ENCODE measurements at regions of chr1 and their contacts with region 1.

Region 1: DNA sequence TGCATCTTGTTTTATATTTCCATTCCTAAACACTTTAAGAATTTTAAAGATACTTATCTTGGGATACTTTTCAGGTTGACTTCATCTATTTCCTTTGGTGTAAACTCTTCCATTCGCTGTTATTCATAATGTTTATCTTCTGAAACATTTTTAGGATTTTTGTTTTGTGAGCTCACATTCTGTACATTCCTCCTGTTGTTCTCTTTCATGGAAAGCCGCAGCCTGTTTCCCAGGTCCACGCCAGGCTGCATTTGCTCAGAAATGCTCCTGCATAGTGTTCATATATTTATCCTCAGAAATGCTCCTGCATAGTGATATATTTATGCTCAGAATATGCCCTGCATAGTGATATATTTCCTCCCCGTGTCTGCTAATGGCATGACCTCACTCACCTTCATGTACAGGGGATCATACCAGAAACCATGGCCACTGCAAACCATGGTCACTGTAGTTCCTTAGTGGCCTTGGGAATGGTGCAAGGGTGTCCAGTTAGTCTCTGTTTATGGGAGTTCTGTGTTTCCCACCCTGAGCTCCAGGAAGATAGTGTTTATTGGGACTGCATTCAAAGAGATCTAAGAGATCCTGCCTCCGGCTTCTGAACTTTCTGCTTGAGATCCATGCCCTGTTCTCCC is 153.9 kb upstream of the GREM2 start:
- DNase-seq: peak; percentile 75 to 84
- H3K4me3 ChIP-seq: no peak overlapping the region
- H3K27ac ChIP-seq: peak overlapping the region; percentile 55
- H3K4me1 ChIP-seq: peaks cover 19% of the 10 kb centered on the region
- H3K27me3 ChIP-seq: peaks cover 9% of the 10 kb centered on the region
- CTCF ChIP-seq: no peak

Region 2: GRCh38 chr1:240732390-240732789 is 33.5 kb before region 1 on chr1:
- CTCF ChIA-PET with region 1: no interaction called
- POLR2A ChIA-PET with region 1: no interaction called
- intact Hi-C with region 1: loop called (anchors 1 kb)
- DNase-seq: peak; percentile 15 to 48
- H3K4me3 ChIP-seq: no peak overlapping the region
- H3K27ac ChIP-seq: no peak overlapping the region
- H3K4me1 ChIP-seq: no peaks in the 10 kb centered on the region
- H3K27me3 ChIP-seq: peaks cover 12% of the 10 kb centered on the region; the same call in 1 of the 2 replicates
- CTCF ChIP-seq: peak; percentile 86

Region 3: GRCh38 chr1:240784776-240785175 is 18.9 kb after region 1 on chr1:
- CTCF ChIA-PET with region 1: no interaction called
- POLR2A ChIA-PET with region 1: interaction called, 15 read pairs
- intact Hi-C with region 1: loop called (anchors 1 kb)
- DNase-seq: no peak
- H3K4me3 ChIP-seq: no peak overlapping the region
- H3K27ac ChIP-seq: no peak overlapping the region
- H3K4me1 ChIP-seq: peaks cover 16% of the 10 kb centered on the region; the same call in 1 of the 2 replicates
- H3K27me3 ChIP-seq: no peaks in the 10 kb centered on the region
- CTCF ChIP-seq: no peak

Region 4: DNA sequence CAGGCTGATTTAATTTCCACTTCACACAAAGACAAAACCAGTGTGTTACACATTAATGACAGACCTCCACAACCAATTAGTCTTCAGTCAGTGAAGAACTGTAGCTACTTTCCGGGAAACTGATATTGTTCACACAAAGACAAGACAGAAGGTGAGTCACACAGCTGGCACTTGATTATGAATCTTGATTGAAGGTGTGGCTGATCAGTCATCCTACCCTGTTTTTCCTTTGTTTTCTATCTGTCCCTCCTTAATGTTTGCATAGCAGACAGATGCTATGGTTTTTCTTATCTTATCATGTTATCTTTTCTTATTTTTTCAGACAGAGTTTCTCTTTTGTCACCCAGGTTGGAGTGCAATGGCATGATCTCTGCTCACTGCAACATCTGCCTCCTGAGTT is 31.2 kb after region 1 on chr1:
- CTCF ChIA-PET with region 1: no interaction called
- POLR2A ChIA-PET with region 1: no interaction called
- intact Hi-C with region 1: loop called (anchors 1 kb)
- DNase-seq: peak; percentile 31 to 65
- H3K4me3 ChIP-seq: no peak overlapping the region
- H3K27ac ChIP-seq: no peak overlapping the region
- H3K4me1 ChIP-seq: peaks cover 10% of the 10 kb centered on the region; the same call in 1 of the 2 replicates
- H3K27me3 ChIP-seq: no peaks in the 10 kb centered on the region
- CTCF ChIP-seq: no peak

Region 5: DNA sequence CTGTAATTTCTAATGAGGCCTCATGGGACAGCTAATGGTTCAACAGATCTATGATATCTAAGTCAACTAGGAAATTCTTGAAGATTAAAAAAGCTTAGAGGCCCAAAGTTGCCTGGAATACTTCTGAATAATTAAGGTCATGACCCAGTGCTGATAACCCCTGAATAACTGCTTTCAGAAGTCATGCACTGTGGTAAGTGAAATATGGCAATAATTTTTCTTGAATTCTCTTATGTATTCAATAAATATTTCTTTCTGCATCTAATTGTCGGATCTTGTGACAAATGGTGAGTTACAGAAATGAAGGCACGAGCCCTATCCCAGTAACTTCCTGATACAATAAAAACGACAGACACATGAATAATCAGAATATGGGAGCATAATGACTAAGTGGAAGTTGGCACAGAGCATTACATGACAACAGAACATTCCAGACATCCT is 65.4 kb after region 1 on chr1:
- CTCF ChIA-PET with region 1: no interaction called
- POLR2A ChIA-PET with region 1: interaction called, 5 read pairs
- intact Hi-C with region 1: loop called (anchors 1 kb)
- DNase-seq: peak; percentile 9 to 69
- H3K4me3 ChIP-seq: no peak overlapping the region
- H3K27ac ChIP-seq: no peak overlapping the region
- H3K4me1 ChIP-seq: no peaks in the 10 kb centered on the region
- H3K27me3 ChIP-seq: peaks cover 29% of the 10 kb centered on the region; the same call in 1 of the 2 replicates
- CTCF ChIP-seq: no peak

Region 6: DNA sequence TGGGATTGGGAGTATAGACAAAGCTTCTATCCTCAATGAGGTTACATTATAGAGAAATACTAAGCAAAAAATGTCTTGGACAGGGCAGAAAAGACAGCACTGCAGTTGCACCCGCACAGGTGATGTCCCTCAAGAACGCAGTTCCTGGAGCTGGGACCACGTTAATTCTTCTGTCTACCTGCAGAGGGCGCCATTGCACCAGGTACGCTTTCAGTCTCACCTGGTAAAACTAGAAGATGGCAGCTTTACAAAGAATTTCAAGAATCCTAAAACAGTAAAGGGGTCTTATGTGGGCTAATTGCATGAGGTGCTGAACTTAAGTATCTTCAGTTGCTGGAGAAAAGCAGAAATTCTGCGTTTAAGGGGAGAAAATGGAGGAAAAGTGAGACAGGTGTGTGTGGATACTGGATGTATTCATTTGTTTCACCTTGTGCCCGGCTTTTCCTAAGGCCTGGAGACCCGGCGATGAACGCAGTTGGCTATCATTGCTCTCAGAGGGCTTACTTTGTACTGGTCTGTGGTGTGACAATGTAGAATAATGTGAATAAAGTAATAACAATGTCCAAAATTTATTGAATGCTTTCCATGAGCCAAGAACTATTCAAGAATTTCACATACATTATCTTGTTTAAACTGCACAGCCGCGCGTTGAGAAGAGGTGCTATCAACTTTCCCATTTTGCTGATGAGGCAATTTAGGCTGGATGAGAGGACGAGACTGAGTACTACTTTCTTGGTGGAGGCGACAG is 122.4 kb after region 1 on chr1:
- CTCF ChIA-PET with region 1: no interaction called
- POLR2A ChIA-PET with region 1: no interaction called
- intact Hi-C with region 1: loop called (anchors 10 kb)
- DNase-seq: peak in 1 of 2 experiments; percentile 47
- H3K4me3 ChIP-seq: no peak overlapping the region
- H3K27ac ChIP-seq: no peak overlapping the region
- H3K4me1 ChIP-seq: no peaks in the 10 kb centered on the region
- H3K27me3 ChIP-seq: no peaks in the 10 kb centered on the region
- CTCF ChIP-seq: peak; percentile 92

Region 7: GRCh38 chr1:241077386-241078147 is 311.7 kb after region 1 on chr1:
- CTCF ChIA-PET with region 1: no interaction called
- POLR2A ChIA-PET with region 1: no interaction called
- intact Hi-C with region 1: no loop called
- DNase-seq: no peak
- H3K4me3 ChIP-seq: no peak overlapping the region
- H3K27ac ChIP-seq: no peak overlapping the region
- H3K4me1 ChIP-seq: no peaks in the 10 kb centered on the region
- H3K27me3 ChIP-seq: peaks cover 11% of the 10 kb centered on the region; the same call in 1 of the 2 replicates
- CTCF ChIP-seq: no peak

Region 8: DNA sequence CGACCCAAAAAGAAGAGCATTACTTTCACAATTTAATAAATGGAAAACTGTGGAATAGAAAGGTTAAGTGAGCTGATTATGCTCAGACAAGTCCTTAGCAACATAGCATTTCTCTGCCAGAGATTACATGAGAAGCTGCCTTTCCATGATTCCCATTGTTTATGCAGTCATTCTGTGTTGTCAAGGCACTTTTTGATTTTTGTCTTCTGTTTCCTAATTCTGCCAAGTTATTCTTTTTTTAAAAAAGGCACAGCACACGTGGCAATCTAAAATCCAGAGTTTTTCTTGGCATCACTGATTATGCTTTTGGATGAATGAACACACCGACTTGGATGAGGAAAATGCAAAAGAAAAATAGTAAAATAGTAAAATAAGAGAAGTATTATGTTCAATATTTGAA is 406.1 kb after region 1 on chr1:
- CTCF ChIA-PET with region 1: no interaction called
- POLR2A ChIA-PET with region 1: no interaction called
- intact Hi-C with region 1: no loop called
- DNase-seq: no peak
- H3K4me3 ChIP-seq: no peak overlapping the region
- H3K27ac ChIP-seq: no peak overlapping the region
- H3K4me1 ChIP-seq: no peaks in the 10 kb centered on the region
- H3K27me3 ChIP-seq: peaks cover 6% of the 10 kb centered on the region; the same call in 1 of the 2 replicates
- CTCF ChIP-seq: no peak

Region 9: GRCh38 chr1:241640029-241640818 is 874.4 kb after region 1 on chr1 and contains the starts of genes CHML and OPN3:
- CTCF ChIA-PET with region 1: no interaction called
- POLR2A ChIA-PET with region 1: interaction called, 19 read pairs
- intact Hi-C with region 1: no loop called
- DNase-seq: peak; percentile 70 to 93
- H3K4me3 ChIP-seq: peak within 1 kb of the TSS; percentile 78
- H3K27ac ChIP-seq: peak within 1 kb of the TSS; percentile 86
- H3K4me1 ChIP-seq: peaks cover 46% of the 10 kb centered on the region
- H3K27me3 ChIP-seq: no peaks in the 10 kb centered on the region
- CTCF ChIP-seq: no peak
- total RNA-seq, gene CHML: 34.6 and 47.8 TPM in 2 replicates
- total RNA-seq, gene OPN3: 53.2 and 62.7 TPM in 2 replicates